ENCODE measurements at regions of chr22 and their contacts with region 1.

Region 1: GRCh38 chr22:45271667-45272201 is 13.0 kb upstream of the UPK3A start:
- DNase-seq: no peak
- ATAC-seq: peak; percentile 3
- H3K4me3 ChIP-seq: no peak overlapping the region
- H3K27ac ChIP-seq: peak overlapping the region; percentile 78
- H3K4me1 ChIP-seq: peaks cover 11% of the 10 kb centered on the region
- H3K27me3 ChIP-seq: peaks cover 13% of the 10 kb centered on the region
- CTCF ChIP-seq: no peak

Region 2: DNA sequence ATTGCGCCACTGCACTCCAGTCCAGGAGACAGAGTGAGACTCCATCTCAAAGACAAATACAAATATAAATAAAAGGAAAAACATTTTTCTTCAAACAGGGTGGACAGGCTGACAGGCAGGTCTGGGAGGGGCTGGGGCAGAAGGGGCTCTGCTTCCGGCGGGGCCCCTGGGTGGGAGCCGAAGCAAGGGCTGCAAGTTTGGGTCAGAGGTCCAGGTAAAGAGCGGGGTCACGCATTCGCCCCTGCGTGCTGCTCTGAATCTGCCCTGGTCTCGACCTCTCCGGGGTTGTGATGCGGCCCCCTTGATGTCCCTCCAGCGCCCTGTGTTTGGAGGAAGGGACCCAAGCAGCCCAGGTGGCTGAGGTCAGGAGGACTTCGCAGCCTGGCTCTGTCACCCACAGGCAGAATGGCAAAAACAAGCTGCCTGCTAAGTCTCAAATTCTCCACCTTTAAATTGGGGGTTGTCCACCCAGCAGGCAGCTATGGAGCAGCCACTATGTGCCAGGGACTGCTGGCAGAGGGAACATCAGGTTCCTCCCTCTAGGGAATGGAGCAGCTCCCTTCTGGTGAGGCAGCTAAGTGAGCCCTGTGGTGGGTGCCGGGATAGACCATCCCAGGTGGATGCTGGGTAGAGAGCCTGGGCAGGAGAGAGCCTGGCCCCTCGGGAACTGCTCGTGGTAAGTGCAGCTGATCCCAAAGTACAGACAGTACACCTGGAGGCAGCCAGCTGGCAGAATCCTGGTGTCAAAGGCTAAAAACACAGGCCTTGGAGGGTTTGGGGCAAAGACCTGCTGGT is 251.7 kb before region 1 on chr22:
- intact Hi-C with region 1: no loop called
- DNase-seq: no peak
- ATAC-seq: no peak
- H3K4me3 ChIP-seq: no peak overlapping the region
- H3K27ac ChIP-seq: no peak overlapping the region
- H3K4me1 ChIP-seq: no peaks in the 10 kb centered on the region
- H3K27me3 ChIP-seq: peaks cover 37% of the 10 kb centered on the region
- CTCF ChIP-seq: no peak

Region 3: GRCh38 chr22:45435544-45436139 is 163.9 kb after region 1 on chr22:
- intact Hi-C with region 1: loop called (anchors 5 kb)
- DNase-seq: peak; percentile 91
- ATAC-seq: peak; percentile 96
- H3K4me3 ChIP-seq: no peak overlapping the region
- H3K27ac ChIP-seq: peak overlapping the region; percentile 48
- H3K4me1 ChIP-seq: peaks cover 5% of the 10 kb centered on the region
- H3K27me3 ChIP-seq: no peaks in the 10 kb centered on the region
- CTCF ChIP-seq: peak; percentile 99

Measured in upper lobe of right lung (tissue), 1 donor.